ENCODE measurements at regions of chr22 and their contacts with region 1.

Region 1: DNA sequence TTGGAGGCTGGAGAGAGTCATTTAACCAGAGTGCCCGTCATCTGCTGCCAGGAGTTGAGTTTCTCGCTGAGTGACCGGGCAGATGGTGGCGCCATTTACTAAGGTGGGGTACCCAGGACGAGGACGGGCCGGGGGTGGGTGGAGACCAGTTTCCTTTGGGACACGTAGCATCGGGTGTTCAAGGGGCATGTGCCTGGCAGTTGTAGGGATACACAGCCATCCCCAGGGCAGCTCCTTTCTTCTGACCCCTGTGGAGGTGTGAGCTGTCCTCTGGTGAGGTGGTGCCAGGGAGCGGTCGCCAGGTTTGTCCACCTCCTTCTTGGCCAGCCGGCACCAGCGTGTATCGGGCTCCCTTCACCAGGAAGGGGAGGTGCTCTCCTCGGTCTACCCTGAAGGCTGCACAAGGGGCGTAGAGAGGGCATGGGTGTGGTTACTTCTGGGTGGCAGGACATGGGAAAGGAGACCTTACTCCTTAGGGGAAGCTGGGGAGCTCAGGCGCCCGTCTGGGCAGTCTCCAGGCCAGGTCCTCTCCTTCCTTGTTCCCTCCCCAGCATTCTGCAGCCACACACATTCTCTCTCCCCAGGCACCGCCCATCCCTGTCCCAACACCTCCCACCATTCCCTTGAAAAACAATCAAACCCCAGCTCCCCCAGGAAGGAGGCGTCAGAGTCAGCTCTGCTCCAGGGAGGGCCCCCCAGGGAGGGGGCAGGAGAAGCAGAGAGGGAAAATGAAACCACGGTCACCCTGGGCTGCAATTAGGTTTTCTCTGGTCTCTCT is 10.3 kb upstream of the MB start:
- DNase-seq: peak; percentile 88
- H3K4me3 Mint-ChIP-seq: peak overlapping the region; percentile 77
- H3K27ac Mint-ChIP-seq: peak overlapping the region; percentile 96
- H3K4me1 Mint-ChIP-seq: peaks cover 35% of the 10 kb centered on the region
- H3K27me3 Mint-ChIP-seq: no peaks in the 10 kb centered on the region
- CTCF ChIP-seq: peak; percentile 58

Region 2: GRCh38 chr22:35430897-35431322 is 196.5 kb before region 1 on chr22:
- CTCF ChIA-PET with region 1: interaction called, 10 read pairs
- POLR2A ChIA-PET with region 1: no interaction called
- intact Hi-C with region 1: loop called (anchors 1 kb)
- DNase-seq: peak; percentile 84
- H3K4me3 Mint-ChIP-seq: no peak overlapping the region
- H3K27ac Mint-ChIP-seq: no peak overlapping the region
- H3K4me1 Mint-ChIP-seq: peaks cover 10% of the 10 kb centered on the region
- H3K27me3 Mint-ChIP-seq: no peaks in the 10 kb centered on the region
- CTCF ChIP-seq: peak; percentile 94

Region 3: GRCh38 chr22:35552196-35552842 is 75.1 kb before region 1 on chr22:
- CTCF ChIA-PET with region 1: no interaction called
- POLR2A ChIA-PET with region 1: no interaction called
- intact Hi-C with region 1: no loop called
- DNase-seq: no peak
- H3K4me3 Mint-ChIP-seq: no peak overlapping the region
- H3K27ac Mint-ChIP-seq: no peak overlapping the region
- H3K4me1 Mint-ChIP-seq: no peaks in the 10 kb centered on the region
- H3K27me3 Mint-ChIP-seq: no peaks in the 10 kb centered on the region
- CTCF ChIP-seq: no peak

Region 4: GRCh38 chr22:35575116-35575748 is 52.2 kb before region 1 on chr22:
- CTCF ChIA-PET with region 1: no interaction called
- POLR2A ChIA-PET with region 1: no interaction called
- intact Hi-C with region 1: no loop called
- DNase-seq: no peak
- H3K4me3 Mint-ChIP-seq: no peak overlapping the region
- H3K27ac Mint-ChIP-seq: no peak overlapping the region
- H3K4me1 Mint-ChIP-seq: no peaks in the 10 kb centered on the region
- H3K27me3 Mint-ChIP-seq: no peaks in the 10 kb centered on the region
- CTCF ChIP-seq: no peak

Region 5: GRCh38 chr22:35589071-35589952 is 38.1 kb before region 1 on chr22:
- CTCF ChIA-PET with region 1: interaction called, 12 read pairs
- POLR2A ChIA-PET with region 1: interaction called, 5 read pairs
- intact Hi-C with region 1: loop called (anchors 1 kb)
- DNase-seq: peak; percentile 97
- H3K4me3 Mint-ChIP-seq: no peak overlapping the region
- H3K27ac Mint-ChIP-seq: peak overlapping the region; percentile 36
- H3K4me1 Mint-ChIP-seq: peaks cover 32% of the 10 kb centered on the region
- H3K27me3 Mint-ChIP-seq: no peaks in the 10 kb centered on the region
- CTCF ChIP-seq: no peak

Region 6: DNA sequence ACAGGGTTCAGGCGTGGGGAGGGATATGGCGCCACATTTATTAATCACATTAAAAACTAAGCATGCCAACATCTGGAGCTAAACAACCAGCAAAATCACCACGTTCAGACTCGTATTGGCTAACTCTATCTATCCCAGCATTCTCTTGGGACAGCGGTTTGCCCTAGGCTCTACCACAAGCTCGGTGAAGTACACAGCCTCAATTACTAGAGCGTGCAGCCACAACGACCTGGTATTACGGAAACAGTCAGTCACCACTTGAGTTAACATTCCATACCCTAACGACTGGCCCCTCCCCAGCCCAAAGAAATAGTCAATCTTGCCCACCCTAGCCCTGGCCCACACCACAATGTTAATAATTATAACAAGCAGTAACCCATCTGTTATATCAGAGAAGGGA is 122.4 kb after region 1 on chr22:
- CTCF ChIA-PET with region 1: interaction called, 10 read pairs
- POLR2A ChIA-PET with region 1: no interaction called
- intact Hi-C with region 1: loop called (anchors 10 kb)
- DNase-seq: no peak
- H3K4me3 Mint-ChIP-seq: no peak overlapping the region
- H3K27ac Mint-ChIP-seq: no peak overlapping the region
- H3K4me1 Mint-ChIP-seq: no peaks in the 10 kb centered on the region
- H3K27me3 Mint-ChIP-seq: no peaks in the 10 kb centered on the region
- CTCF ChIP-seq: no peak

Region 7: GRCh38 chr22:35785181-35785923 is 157.9 kb after region 1 on chr22:
- CTCF ChIA-PET with region 1: interaction called, 4 read pairs
- POLR2A ChIA-PET with region 1: no interaction called
- intact Hi-C with region 1: loop called (anchors 1 kb)
- DNase-seq: peak; percentile 36
- H3K4me3 Mint-ChIP-seq: no peak overlapping the region
- H3K27ac Mint-ChIP-seq: peak overlapping the region; percentile 42
- H3K4me1 Mint-ChIP-seq: peaks cover 31% of the 10 kb centered on the region
- H3K27me3 Mint-ChIP-seq: no peaks in the 10 kb centered on the region
- CTCF ChIP-seq: no peak

Region 8: DNA sequence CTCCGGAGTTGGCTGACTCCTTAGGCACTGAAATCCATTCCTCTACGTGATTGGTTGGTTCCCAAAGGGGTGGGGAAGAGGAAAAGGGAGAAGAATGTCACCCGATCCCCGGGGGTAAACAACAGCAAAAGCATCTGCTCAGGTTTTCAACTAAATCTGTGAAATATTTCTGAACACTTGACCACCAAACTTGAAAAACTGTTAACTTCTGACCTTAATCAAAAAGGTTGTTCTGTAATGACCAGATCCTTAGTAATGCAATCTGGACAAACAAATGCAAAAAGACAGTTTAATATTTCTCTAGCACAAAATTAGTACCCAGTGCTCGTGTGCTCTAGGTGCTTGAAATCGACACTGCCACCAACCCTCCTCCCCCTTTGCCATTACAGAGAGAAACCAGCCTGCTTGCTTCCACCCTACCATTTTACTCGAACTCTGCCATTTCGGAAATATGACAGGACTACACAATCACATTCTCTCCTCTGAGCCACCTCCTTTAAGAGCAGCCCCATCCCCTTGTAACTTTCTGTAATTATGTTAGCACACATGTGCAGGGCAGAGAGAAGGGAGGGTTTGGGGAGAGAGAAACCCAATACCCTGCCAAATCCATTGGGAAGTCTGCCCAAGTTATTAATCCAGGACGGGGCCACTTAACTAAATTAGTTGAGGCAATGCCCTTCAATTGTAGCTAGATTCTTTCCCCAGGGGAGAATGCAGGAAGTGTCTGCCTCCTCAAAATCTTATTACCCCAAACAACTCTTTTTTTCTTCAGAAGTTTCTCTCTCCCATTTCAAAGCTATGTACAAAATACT is 287.4 kb after region 1 on chr22:
- CTCF ChIA-PET with region 1: interaction called, 31 read pairs
- POLR2A ChIA-PET with region 1: interaction called, 8 read pairs
- intact Hi-C with region 1: no loop called
- DNase-seq: peak; percentile 95
- H3K4me3 Mint-ChIP-seq: peak overlapping the region; percentile 75
- H3K27ac Mint-ChIP-seq: peak overlapping the region; percentile 91
- H3K4me1 Mint-ChIP-seq: peaks cover 53% of the 10 kb centered on the region
- H3K27me3 Mint-ChIP-seq: no peaks in the 10 kb centered on the region
- CTCF ChIP-seq: no peak

Region 9: GRCh38 chr22:36123673-36124630 is 496.5 kb after region 1 on chr22:
- CTCF ChIA-PET with region 1: interaction called, 33 read pairs
- POLR2A ChIA-PET with region 1: no interaction called
- intact Hi-C with region 1: loop called (anchors 1 kb)
- DNase-seq: peak; percentile 88
- H3K4me3 Mint-ChIP-seq: peak overlapping the region; percentile 66
- H3K27ac Mint-ChIP-seq: peak overlapping the region; percentile 73
- H3K4me1 Mint-ChIP-seq: peaks cover 9% of the 10 kb centered on the region
- H3K27me3 Mint-ChIP-seq: peaks cover 28% of the 10 kb centered on the region
- CTCF ChIP-seq: peak; percentile 93